Common myeloid progenitor, CD34-positive (primary cell): ENCODE measurements at regions of chr3 and their contacts with region 1.

Region 1: DNA sequence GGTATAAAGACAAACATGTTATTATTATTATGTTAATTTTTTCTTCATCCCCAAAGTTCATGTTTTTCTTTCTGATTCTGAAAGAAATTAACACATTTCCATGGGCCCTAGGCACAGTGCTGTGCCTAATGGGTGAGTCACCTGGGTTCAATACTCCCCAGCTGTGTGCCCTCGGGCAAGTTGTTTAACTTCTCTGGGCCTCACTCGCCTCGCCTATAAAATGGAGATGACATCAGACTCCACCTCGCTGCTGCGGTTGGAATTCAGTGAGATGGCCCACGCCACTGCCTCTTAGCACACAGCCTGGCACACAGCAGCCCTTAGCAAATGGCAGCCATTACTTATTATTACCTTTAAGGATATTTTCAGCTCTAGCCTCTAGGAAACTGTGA is 22.6 kb downstream of the DNASE1L3 start:
- DNase-seq: no peak
- H3K4me3 ChIP-seq: no peak overlapping the region
- H3K27ac ChIP-seq: no peak overlapping the region
- H3K4me1 ChIP-seq: peaks cover 0 to 4% (median 0%) of the 10 kb centered on the region in 4 experiments
- H3K27me3 ChIP-seq: no peaks in the 10 kb centered on the region

Region 2: GRCh38 chr3:58167431-58168351 is 20.5 kb before region 1 on chr3:
- CTCF ChIA-PET with region 1: interaction called, 10 read pairs
- POLR2A ChIA-PET with region 1: no interaction called
- DNase-seq: peak; percentile 43 to 67 (median 52)
- H3K4me3 ChIP-seq: no peak overlapping the region
- H3K27ac ChIP-seq: no peak overlapping the region
- H3K4me1 ChIP-seq: no peaks in the 10 kb centered on the region
- H3K27me3 ChIP-seq: no peaks in the 10 kb centered on the region

Region 3: GRCh38 chr3:58177747-58178527 is 10.2 kb before region 1 on chr3:
- CTCF ChIA-PET with region 1: interaction called, 55 read pairs
- POLR2A ChIA-PET with region 1: no interaction called
- DNase-seq: peak; percentile 88 to 92 (median 91)
- H3K4me3 ChIP-seq: peak overlapping the region in 6 of 7 experiments; percentile 35 to 77 (median 57)
- H3K27ac ChIP-seq: no peak overlapping the region
- H3K4me1 ChIP-seq: peaks cover 0 to 36% (median 34%) of the 10 kb centered on the region in 4 experiments
- H3K27me3 ChIP-seq: peaks cover 0 to 2% (median 0%) of the 10 kb centered on the region in 5 experiments

Region 4: DNA sequence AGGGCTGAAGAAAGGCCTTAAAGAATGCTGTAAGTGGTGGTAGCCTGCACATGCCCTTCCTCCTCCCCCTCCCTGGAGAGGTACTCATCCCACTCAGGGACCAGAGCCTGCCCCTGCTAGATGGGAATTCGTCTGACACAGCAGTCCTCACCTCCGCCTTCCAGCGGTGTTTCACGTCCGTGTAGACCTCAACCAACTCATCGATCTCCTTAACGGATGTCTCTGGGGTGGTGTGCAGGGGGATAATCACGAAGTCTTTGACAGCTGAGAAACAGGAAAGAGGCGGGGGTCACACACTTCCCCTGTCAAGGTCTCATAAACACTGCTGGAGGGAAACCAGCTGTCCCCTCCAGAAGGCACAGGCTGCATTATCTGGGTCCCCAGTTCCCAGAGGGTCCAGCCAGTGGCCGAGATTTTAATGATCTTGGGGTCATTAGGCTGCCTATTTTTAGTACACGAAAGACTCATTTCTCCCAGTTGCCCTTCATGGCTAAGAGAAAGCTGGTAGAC is 12.7 kb after region 1 on chr3:
- CTCF ChIA-PET with region 1: interaction called, 22 read pairs
- POLR2A ChIA-PET with region 1: no interaction called
- DNase-seq: peak in 2 of 3 donors; percentile 36 to 49
- H3K4me3 ChIP-seq: peak overlapping the region in 4 of 7 experiments; percentile 1 to 51 (median 10)
- H3K27ac ChIP-seq: no peak overlapping the region
- H3K4me1 ChIP-seq: peaks cover 0 to 19% (median 9%) of the 10 kb centered on the region in 4 experiments
- H3K27me3 ChIP-seq: no peaks in the 10 kb centered on the region

Region 5: GRCh38 chr3:58217209-58217811 is 29.1 kb after region 1 on chr3:
- CTCF ChIA-PET with region 1: interaction called, 54 read pairs
- POLR2A ChIA-PET with region 1: interaction called, 6 read pairs
- DNase-seq: peak; percentile 80 to 88 (median 86)
- H3K4me3 ChIP-seq: peak overlapping the region in 6 of 7 experiments; percentile 29 to 75 (median 48)
- H3K27ac ChIP-seq: no peak overlapping the region
- H3K4me1 ChIP-seq: peaks cover 5 to 24% (median 9%) of the 10 kb centered on the region in 4 experiments
- H3K27me3 ChIP-seq: no peaks in the 10 kb centered on the region

Region 6: DNA sequence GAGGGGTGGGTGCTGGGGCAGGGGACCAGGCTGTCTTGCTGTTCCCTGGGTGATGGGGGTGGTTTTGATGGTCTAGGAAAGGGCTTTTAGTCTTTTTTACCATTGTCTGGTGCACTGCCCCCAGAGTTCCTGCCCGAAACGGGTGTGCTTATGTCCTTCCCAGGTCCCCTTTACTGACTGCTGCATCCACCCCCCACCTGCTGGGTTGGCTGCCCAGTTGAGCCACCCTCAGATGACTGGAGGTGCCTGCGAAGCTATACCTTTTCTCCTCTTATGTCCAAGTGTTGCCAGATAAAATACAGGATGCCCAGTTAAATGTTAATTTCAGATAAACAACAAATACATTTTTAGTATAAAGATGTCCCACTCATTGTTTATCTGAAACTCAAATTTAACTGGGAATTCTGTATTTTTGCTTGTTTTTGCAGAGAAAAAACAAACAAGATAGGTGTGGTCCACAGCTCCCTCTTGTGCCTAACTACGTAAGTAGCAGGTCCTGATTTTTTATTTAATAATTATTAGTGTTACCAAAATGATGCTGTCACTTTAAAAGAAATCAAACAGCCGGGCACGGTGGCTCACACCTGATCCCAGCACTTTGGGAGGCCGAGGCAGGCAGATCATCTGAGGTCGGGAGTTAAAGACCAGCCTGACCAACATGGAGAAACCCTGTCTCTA is 111.8 kb after region 1 on chr3:
- CTCF ChIA-PET with region 1: interaction called, 70 read pairs
- POLR2A ChIA-PET with region 1: no interaction called
- DNase-seq: peak; percentile 48 to 64 (median 61)
- H3K4me3 ChIP-seq: no peak overlapping the region
- H3K27ac ChIP-seq: no peak overlapping the region
- H3K4me1 ChIP-seq: no peaks in the 10 kb centered on the region
- H3K27me3 ChIP-seq: peaks cover 0 to 6% (median 0%) of the 10 kb centered on the region in 5 experiments

Region 7: DNA sequence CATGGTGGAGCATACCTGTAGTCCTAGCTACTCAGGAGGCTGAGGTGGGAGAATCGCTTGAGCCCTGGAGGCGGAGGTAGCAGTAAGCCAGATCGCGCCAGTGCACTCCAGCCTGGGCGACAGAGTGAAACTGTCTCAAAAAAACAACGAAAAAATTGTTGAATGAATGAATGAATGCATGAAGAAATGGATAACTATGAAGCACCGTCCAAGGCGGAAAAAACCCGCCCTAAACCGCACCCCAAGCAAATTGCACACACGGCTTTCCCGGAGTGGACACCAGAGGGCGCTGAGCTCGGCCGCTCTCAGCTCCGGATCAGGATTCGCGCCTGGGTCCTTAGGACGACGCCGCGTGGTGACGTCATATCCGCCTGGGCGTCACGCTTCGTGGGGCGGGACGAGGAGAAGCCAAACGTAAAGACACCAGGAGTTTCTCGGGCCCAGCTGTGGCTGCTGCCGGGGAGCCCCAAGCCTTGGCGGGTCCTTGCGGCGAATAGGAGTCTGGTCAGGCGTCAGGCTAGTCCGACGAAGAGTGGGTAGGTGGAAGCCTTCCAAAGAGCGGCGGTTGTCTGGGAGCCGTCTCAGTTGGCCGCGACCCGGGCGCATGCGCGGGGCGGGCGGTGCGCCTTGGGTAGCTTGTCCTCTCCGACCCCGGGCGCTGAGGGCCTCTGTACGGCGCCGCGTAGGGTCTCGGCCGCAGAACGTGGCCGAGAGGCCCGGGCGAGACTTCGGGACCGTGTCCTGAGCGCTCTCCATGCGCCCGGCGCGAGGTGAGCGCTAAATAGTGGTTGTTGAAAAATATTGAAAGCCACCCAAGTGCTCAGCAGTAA is 117.9 kb after region 1 on chr3 and contains the starts of genes HTD2 and RPP14:
- CTCF ChIA-PET with region 1: interaction called, 57 read pairs
- POLR2A ChIA-PET with region 1: no interaction called
- DNase-seq: peak; percentile 98 to 100 (median 99)
- H3K4me3 ChIP-seq: peak within 1 kb of the TSS; percentile 66 to 97 (median 92)
- H3K27ac ChIP-seq: peak within 1 kb of the TSS; percentile 98 to 99
- H3K4me1 ChIP-seq: peaks cover 3 to 22% (median 19%) of the 10 kb centered on the region in 4 experiments
- H3K27me3 ChIP-seq: peaks cover 0 to 4% (median 0%) of the 10 kb centered on the region in 5 experiments